MCF 10A (cell line): ENCODE measurements at regions of chr21 and their contacts with region 1.

Region 1: DNA sequence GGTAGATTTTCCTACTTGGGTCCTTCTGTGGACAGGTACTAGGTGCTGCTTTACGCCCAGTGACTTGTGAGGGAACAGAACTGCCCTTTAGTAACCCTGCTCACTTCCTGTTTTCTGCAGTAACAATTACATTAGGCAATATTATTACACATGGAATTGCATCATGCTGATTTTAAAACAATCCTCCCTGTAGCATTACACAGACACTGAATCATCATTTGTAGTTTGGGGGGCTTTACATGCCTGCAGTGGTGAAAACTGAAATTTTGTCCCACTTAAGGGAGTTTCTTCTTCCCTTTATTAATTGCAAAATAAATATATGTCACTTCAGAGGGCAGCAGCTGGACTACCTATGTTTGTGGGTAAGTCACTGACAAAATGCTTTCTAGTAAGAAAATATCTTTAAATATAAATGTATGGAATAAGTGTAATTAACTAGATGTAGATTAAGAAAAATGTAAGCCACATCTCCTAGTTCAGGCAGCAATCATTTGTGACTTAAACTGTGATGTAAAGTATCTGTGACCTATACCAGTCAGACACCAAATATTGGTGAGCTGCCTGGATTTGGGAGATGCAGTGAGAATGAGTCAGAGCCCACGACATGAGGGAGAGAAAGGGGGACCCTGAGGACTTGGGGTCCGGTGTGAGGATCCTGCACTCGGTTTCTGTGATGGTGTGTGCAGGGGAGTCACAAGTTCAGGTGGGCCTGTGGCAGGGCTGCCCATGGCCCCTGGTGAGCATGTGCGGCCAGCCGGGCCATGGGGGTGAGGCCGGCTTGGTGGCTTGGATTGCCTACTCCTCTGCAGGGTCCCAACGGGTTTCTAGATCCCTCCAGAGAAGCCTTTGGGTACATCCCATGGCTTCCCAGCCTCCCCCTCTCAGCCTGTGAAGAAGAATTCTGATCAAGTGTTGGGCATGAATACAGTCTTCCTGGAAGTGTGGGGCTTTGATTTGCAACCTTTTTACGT is 19.2 kb upstream of the ABCG1 start:
- DNase-seq: peak; percentile 85
- H3K4me3 Mint-ChIP-seq: no peak overlapping the region
- H3K27ac Mint-ChIP-seq: peak overlapping the region; percentile 43
- H3K4me1 Mint-ChIP-seq: peaks cover 36% of the 10 kb centered on the region
- H3K27me3 Mint-ChIP-seq: no peaks in the 10 kb centered on the region
- CTCF ChIP-seq: no peak

Region 2: GRCh38 chr21:42227909-42228708 is 28.3 kb after region 1 on chr21:
- CTCF ChIA-PET with region 1: no interaction called
- POLR2A ChIA-PET with region 1: interaction called, 18 read pairs
- intact Hi-C with region 1: loop called (anchors 2 kb)
- DNase-seq: peak; percentile 96
- H3K4me3 Mint-ChIP-seq: no peak overlapping the region
- H3K27ac Mint-ChIP-seq: peak overlapping the region; percentile 50
- H3K4me1 Mint-ChIP-seq: peaks cover 35% of the 10 kb centered on the region
- H3K27me3 Mint-ChIP-seq: no peaks in the 10 kb centered on the region
- CTCF ChIP-seq: no peak

Region 3: DNA sequence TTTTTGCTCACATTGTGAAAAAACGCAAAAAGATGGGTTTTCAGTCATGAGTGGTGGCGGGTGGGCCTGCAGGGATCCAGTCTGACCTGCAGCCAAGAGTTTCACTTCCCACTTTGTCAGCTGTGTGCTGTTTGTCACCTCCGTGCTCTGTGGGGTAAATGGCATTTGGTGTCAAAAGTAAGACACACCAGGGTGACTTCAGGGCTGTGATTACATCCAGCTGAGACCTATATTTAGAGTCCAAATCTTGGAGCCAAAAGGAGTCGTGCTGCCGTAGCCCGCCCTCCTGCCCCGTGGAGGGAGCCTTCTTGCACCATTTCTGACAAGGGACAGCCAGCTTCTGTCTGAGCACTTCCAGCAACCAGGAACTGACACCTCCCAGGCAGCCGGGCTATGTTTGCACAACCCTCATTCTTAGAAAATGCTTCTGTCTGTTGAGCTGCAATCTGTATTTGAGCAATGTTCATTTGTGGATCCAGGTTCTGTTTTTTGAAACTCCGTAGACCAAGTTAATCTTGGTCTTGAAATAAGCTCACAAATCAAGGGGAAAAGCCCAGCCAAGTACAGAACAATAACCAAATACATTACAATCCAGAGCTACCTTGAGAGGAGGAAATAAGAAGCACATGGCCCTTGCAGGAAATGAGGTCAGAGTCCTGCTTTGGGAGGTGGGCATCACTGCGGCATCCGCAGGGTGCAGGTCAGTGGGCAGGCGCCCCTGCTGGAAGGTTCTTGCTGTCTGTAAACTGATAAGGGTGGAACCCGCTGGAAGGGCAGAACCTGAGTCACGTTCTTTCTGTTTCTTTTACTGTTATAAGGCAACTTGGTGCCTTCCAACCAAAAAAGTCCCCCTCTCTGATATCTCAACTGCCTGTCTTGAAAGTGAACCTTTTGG is 33.5 kb after region 1 on chr21:
- CTCF ChIA-PET with region 1: interaction called, 4 read pairs
- POLR2A ChIA-PET with region 1: interaction called, 18 read pairs
- intact Hi-C with region 1: loop called (anchors 2 kb)
- DNase-seq: no peak
- H3K4me3 Mint-ChIP-seq: peak overlapping the region; percentile 47
- H3K27ac Mint-ChIP-seq: no peak overlapping the region
- H3K4me1 Mint-ChIP-seq: peaks cover 25% of the 10 kb centered on the region
- H3K27me3 Mint-ChIP-seq: no peaks in the 10 kb centered on the region
- CTCF ChIP-seq: no peak

Region 4: DNA sequence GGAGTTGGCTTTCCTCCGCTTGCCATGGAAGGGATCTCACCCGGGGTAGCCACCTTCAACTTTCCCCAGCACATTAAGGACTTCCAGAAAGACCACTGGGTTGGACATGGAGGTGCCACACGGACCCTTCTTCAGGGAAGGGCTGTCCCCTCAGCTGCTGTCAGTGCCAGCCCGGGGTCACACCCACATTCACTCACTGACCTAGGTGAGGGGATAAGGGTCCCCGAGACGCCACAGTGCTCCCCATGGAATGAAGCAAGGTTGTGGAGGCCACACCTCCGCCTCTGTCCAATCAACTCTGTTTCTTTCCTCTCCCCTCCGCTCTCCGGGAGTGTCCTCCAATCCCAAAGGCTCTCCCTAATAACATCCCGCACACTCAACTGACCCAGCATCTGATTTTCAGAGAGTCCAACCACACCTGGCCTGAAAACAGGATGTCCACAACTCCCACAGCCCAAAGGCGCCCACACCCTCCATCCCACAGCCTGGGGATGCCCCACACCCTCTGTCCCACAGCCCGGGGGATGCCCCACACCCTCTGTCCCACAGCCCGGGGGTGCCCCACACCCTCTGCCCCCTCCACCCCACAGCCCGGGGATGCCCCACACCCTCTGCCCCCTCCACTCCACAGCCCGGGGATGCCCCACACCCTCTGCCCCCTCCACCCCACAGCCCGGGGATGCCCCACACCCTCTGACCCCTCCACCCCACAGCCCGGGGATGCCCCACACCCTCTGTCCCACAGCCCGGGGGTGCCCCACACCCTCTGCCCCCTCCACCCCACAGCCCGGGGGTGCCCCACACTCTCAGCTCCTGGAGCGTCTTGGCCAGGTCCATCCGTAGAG is 276.9 kb after region 1 on chr21:
- CTCF ChIA-PET with region 1: no interaction called
- POLR2A ChIA-PET with region 1: no interaction called
- intact Hi-C with region 1: no loop called
- DNase-seq: no peak
- H3K4me3 Mint-ChIP-seq: no peak overlapping the region
- H3K27ac Mint-ChIP-seq: no peak overlapping the region
- H3K4me1 Mint-ChIP-seq: peaks cover 12% of the 10 kb centered on the region
- H3K27me3 Mint-ChIP-seq: no peaks in the 10 kb centered on the region
- CTCF ChIP-seq: no peak